CD8-positive, alpha-beta T cell (primary cell): ENCODE measurements at regions of chr13 and their contacts with region 1.

Region 1: DNA sequence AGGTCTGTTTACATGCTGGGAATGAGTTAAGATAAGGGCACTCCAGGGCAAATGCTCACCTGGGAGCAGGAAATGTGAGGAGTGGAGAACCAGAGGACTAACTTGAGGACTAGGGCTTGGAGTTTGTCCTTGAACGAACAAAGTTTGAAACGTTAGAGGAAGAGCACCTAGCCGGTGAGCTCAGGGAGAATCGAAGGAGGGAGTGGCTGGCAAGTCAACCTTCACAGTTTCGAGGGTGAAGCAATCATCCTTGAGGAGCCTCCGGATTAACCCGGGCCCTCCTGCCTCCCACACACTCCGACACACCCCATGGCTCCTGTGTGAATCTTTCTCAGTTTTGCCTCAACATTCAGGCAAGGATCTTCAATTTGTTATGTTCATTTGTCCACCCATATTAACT is 58.6 kb downstream of the LMO7 start:
- DNase-seq: no peak
- ATAC-seq: no peak
- H3K4me3 ChIP-seq: no peak overlapping the region
- H3K4me3 Mint-ChIP-seq: no peak overlapping the region
- H3K27ac ChIP-seq: no peak overlapping the region
- H3K27ac Mint-ChIP-seq: no peak overlapping the region
- H3K4me1 ChIP-seq: no peaks in the 10 kb centered on the region
- H3K4me1 Mint-ChIP-seq: no peaks in the 10 kb centered on the region
- H3K27me3 ChIP-seq: no peaks in the 10 kb centered on the region
- H3K27me3 Mint-ChIP-seq: no peaks in the 10 kb centered on the region
- CTCF ChIP-seq: no peak

Region 2: GRCh38 chr13:75704579-75705320 is 10.0 kb after region 1 on chr13:
- CTCF ChIA-PET with region 1: interaction called, 17 read pairs
- POLR2A ChIA-PET with region 1: no interaction called
- intact Hi-C with region 1: no loop called
- DNase-seq: no peak
- ATAC-seq: no peak
- H3K4me3 ChIP-seq: no peak overlapping the region
- H3K4me3 Mint-ChIP-seq: no peak overlapping the region
- H3K27ac ChIP-seq: no peak overlapping the region
- H3K27ac Mint-ChIP-seq: no peak overlapping the region
- H3K4me1 ChIP-seq: no peaks in the 10 kb centered on the region
- H3K4me1 Mint-ChIP-seq: peaks cover 4% of the 10 kb centered on the region
- H3K27me3 ChIP-seq: no peaks in the 10 kb centered on the region
- H3K27me3 Mint-ChIP-seq: no peaks in the 10 kb centered on the region
- CTCF ChIP-seq: no peak

Region 3: GRCh38 chr13:75803164-75803611 is 108.5 kb after region 1 on chr13:
- CTCF ChIA-PET with region 1: interaction called, 14 read pairs
- POLR2A ChIA-PET with region 1: no interaction called
- intact Hi-C with region 1: loop called in 1 of 2 experiments (anchors 5 kb)
- DNase-seq: peak in 7 of 9 experiments; percentile 4 to 58 (median 23)
- ATAC-seq: peak; percentile 98
- H3K4me3 ChIP-seq: no peak overlapping the region
- H3K4me3 Mint-ChIP-seq: peak overlapping the region; percentile 36
- H3K27ac ChIP-seq: peak overlapping the region in 1 of 2 experiments; percentile 24
- H3K27ac Mint-ChIP-seq: peak overlapping the region; percentile 87
- H3K4me1 ChIP-seq: peaks cover 18% of the 10 kb centered on the region
- H3K4me1 Mint-ChIP-seq: peaks cover 34% of the 10 kb centered on the region
- H3K27me3 ChIP-seq: no peaks in the 10 kb centered on the region
- H3K27me3 Mint-ChIP-seq: no peaks in the 10 kb centered on the region
- CTCF ChIP-seq: no peak

Region 4: DNA sequence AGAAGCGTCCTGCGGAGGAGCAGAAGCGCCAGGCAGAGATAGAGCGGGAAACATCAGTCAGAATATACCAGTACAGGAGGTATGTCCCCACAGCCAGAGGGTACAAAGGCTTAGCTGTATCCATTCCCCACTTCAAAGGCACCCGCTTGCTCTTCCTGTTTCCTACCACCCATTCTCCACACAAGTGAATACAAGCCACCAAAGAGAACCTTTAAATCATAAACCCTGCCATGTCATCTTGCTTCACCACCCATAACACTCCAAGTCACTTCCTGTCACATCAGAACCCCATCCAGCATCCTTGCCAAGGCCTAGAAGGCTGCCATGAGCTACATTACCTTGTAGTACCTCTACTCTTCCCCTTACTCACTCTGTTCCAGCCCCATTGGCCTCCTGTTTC is 147.2 kb after region 1 on chr13:
- CTCF ChIA-PET with region 1: interaction called, 17 read pairs
- POLR2A ChIA-PET with region 1: no interaction called
- intact Hi-C with region 1: loop called in 1 of 2 experiments (anchors 1 kb)
- DNase-seq: peak in 1 of 9 experiments; percentile 6
- ATAC-seq: no peak
- H3K4me3 ChIP-seq: no peak overlapping the region
- H3K4me3 Mint-ChIP-seq: no peak overlapping the region
- H3K27ac ChIP-seq: no peak overlapping the region
- H3K27ac Mint-ChIP-seq: peak overlapping the region; percentile 2
- H3K4me1 ChIP-seq: peaks cover 3% of the 10 kb centered on the region
- H3K4me1 Mint-ChIP-seq: peaks cover 16% of the 10 kb centered on the region
- H3K27me3 ChIP-seq: no peaks in the 10 kb centered on the region
- H3K27me3 Mint-ChIP-seq: no peaks in the 10 kb centered on the region
- CTCF ChIP-seq: no peak

Region 5: GRCh38 chr13:75870397-75870903 is 175.7 kb after region 1 on chr13:
- CTCF ChIA-PET with region 1: interaction called, 47 read pairs
- POLR2A ChIA-PET with region 1: no interaction called
- intact Hi-C with region 1: loop called (anchors 1 to 5 kb)
- DNase-seq: peak in 4 of 9 experiments; percentile 3 to 54 (median 18)
- ATAC-seq: peak; percentile 62
- H3K4me3 ChIP-seq: peak overlapping the region; percentile 3 to 29
- H3K4me3 Mint-ChIP-seq: peak overlapping the region; percentile 76
- H3K27ac ChIP-seq: peak overlapping the region in 1 of 2 experiments; percentile 0
- H3K27ac Mint-ChIP-seq: peak overlapping the region; percentile 62
- H3K4me1 ChIP-seq: no peaks in the 10 kb centered on the region
- H3K4me1 Mint-ChIP-seq: peaks cover 17% of the 10 kb centered on the region
- H3K27me3 ChIP-seq: no peaks in the 10 kb centered on the region
- H3K27me3 Mint-ChIP-seq: peaks cover 5% of the 10 kb centered on the region
- CTCF ChIP-seq: peak; percentile 89

Region 6: GRCh38 chr13:76473552-76474134 is 778.9 kb after region 1 on chr13:
- CTCF ChIA-PET with region 1: interaction called, 57 read pairs
- POLR2A ChIA-PET with region 1: no interaction called
- intact Hi-C with region 1: loop called in 1 of 2 experiments (anchors 1 kb)
- DNase-seq: peak; percentile 25 to 77 (median 68)
- ATAC-seq: peak; percentile 88
- H3K4me3 ChIP-seq: no peak overlapping the region
- H3K4me3 Mint-ChIP-seq: no peak overlapping the region
- H3K27ac ChIP-seq: no peak overlapping the region
- H3K27ac Mint-ChIP-seq: no peak overlapping the region
- H3K4me1 ChIP-seq: no peaks in the 10 kb centered on the region
- H3K4me1 Mint-ChIP-seq: no peaks in the 10 kb centered on the region
- H3K27me3 ChIP-seq: no peaks in the 10 kb centered on the region
- H3K27me3 Mint-ChIP-seq: peaks cover 8% of the 10 kb centered on the region
- CTCF ChIP-seq: peak; percentile 78